Right ventricle myocardium inferior (tissue), 1 donor: ENCODE measurements at regions of chr9 and their contacts with region 1.

Region 1: GRCh38 chr9:121545875-121546423 is 46.3 kb upstream of the GGTA1 start:
- DNase-seq: peak; percentile 97
- ATAC-seq: peak; percentile 93

Region 2: GRCh38 chr9:121399883-121400607 is 145.9 kb before region 1 on chr9:
- intact Hi-C with region 1: no loop called
- DNase-seq: no peak
- ATAC-seq: no peak

Region 3: GRCh38 chr9:121581786-121582600 is 36.0 kb after region 1 on chr9:
- intact Hi-C with region 1: no loop called
- DNase-seq: no peak
- ATAC-seq: peak; percentile 34

Region 4: DNA sequence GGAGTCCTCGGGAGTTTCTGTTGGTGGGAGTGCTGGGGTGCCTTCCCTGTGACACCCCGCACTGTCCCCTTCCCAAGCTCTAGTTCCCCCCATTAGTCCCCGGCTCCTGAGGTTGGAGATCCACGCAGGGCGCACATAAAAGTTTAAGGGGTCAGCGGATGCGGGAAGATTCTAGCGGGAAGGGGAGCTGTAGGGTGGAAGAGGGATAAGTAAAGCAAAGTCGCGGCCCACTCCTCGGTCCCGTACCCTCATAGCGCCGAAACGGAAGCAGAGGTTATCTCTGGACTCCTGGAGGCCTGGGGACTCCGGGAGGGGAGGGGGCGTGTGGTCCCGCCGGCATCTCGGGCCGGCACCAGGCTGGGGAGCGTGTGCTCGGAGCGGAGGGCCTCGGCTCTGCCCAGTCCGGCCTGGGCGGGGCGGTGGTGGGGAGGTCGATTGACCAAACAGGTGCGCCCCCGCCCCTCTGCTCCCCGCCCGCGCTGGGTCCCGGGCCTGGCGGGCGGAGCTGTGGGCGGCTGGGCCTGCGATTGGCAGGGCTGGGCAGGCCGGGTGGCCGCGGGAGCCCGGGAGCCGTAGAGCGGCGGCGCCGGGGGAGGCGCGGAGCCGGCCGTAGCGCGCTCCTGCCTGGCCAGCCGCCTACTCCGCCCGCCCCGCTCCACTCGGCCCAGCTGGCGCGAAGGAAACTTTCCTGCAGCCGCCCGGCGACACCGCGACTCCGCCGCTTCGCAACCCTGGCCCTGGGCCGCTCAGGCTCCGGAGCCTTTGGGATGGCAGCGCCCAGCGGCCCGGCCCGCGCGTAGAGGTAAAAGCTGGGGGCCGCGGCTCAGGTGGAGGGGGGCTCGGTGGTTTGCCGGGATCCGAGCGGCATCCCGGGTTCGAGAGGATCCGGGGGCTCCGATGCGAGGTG is 53.3 kb after region 1 on chr9:
- intact Hi-C with region 1: loop called (anchors 5 kb)
- DNase-seq: peak; percentile 86
- ATAC-seq: peak; percentile 86

Region 5: GRCh38 chr9:121686930-121687541 is 141.1 kb after region 1 on chr9:
- intact Hi-C with region 1: loop called (anchors 5 kb)
- DNase-seq: peak; percentile 82
- ATAC-seq: peak; percentile 77